ENCODE measurements at regions of chr3 and their contacts with region 1.

Region 1: GRCh38 chr3:112990672-112991602 is at the start of gene GTPBP8:
- DNase-seq: peak; percentile 76 to 87 (median 79)
- H3K4me3 ChIP-seq: peak within 1 kb of the TSS; percentile 91
- H3K4me3 Mint-ChIP-seq: peak within 1 kb of the TSS; percentile 95 to 98 (median 97)
- H3K27ac ChIP-seq: peak within 1 kb of the TSS; percentile 95
- H3K27ac Mint-ChIP-seq: peak within 1 kb of the TSS; percentile 92 to 98 (median 96)
- H3K4me1 ChIP-seq: peaks cover 23% of the 10 kb centered on the region
- H3K4me1 Mint-ChIP-seq: peaks cover 49 to 74% (median 64%) of the 10 kb centered on the region in 3 donors
- H3K27me3 ChIP-seq: no peaks in the 10 kb centered on the region
- H3K27me3 Mint-ChIP-seq: peaks cover 0 to 2% of the 10 kb centered on the region in 2 donors
- total RNA-seq, gene GTPBP8: 29.3 to 29.4 TPM

Region 2: DNA sequence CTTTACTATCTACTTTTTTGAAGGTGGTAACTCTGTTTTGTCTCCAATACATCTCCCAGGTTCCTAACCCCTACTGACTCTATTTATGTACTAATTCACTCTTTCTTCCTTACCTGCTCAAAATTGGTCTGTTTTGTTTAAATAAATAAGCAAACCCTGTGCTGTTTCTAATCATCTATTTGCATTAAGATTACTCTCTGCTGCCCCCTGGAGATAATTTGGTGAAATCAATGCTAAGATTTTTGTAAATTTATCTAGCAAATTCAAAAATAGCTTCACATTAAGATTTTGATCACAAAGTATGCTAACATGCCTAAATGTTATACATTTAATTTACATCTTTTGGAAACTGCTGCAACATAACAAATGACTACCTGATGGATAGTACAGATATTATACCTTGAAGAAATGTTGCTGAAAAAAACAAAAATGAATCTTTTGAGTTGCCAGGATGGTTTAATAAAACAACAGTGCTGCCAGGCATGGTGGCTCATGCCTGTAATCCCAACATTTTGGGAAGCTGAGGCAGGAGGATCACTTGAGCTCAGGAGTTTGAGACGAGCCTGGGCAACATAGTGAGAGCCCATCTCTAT is 11.6 kb before region 1 on chr3:
- CTCF ChIA-PET with region 1: interaction called, 35 read pairs
- POLR2A ChIA-PET with region 1: interaction called, 5 read pairs
- DNase-seq: peak in 2 of 5 donors; percentile 47 to 57
- H3K4me3 ChIP-seq: no peak overlapping the region
- H3K4me3 Mint-ChIP-seq: peak overlapping the region in 1 of 7 donors; percentile 49
- H3K27ac ChIP-seq: no peak overlapping the region
- H3K27ac Mint-ChIP-seq: peak overlapping the region in 1 of 8 donors; percentile 5
- H3K4me1 ChIP-seq: peaks cover 52% of the 10 kb centered on the region
- H3K4me1 Mint-ChIP-seq: peaks cover 48 to 75% (median 68%) of the 10 kb centered on the region in 3 donors
- H3K27me3 ChIP-seq: no peaks in the 10 kb centered on the region
- H3K27me3 Mint-ChIP-seq: no peaks in the 10 kb centered on the region

Region 3: GRCh38 chr3:113019182-113020137 is 28.5 kb after region 1 on chr3:
- CTCF ChIA-PET with region 1: interaction called, 8 read pairs
- POLR2A ChIA-PET with region 1: interaction called, 11 read pairs
- DNase-seq: peak; percentile 78 to 86 (median 82)
- H3K4me3 ChIP-seq: peak overlapping the region; percentile 97
- H3K4me3 Mint-ChIP-seq: peak overlapping the region; percentile 90 to 99 (median 95)
- H3K27ac ChIP-seq: peak overlapping the region; percentile 85
- H3K27ac Mint-ChIP-seq: peak overlapping the region; percentile 89 to 99 (median 97)
- H3K4me1 ChIP-seq: peaks cover 38% of the 10 kb centered on the region
- H3K4me1 Mint-ChIP-seq: peaks cover 48 to 69% (median 68%) of the 10 kb centered on the region in 3 donors
- H3K27me3 ChIP-seq: no peaks in the 10 kb centered on the region
- H3K27me3 Mint-ChIP-seq: no peaks in the 10 kb centered on the region

Measured in CD8-positive, alpha-beta memory T cell (primary cell).